IMR-90 (cell line): ENCODE measurements at regions of chr20 and their contacts with region 1.

Region 1: GRCh38 chr20:52913650-52914387 is 58.3 kb upstream of the TSHZ2 start:
- DNase-seq: no peak
- ATAC-seq: no peak
- H3K4me3 ChIP-seq: no peak overlapping the region
- H3K27ac ChIP-seq: no peak overlapping the region
- H3K4me1 ChIP-seq: no peaks in the 10 kb centered on the region
- H3K27me3 ChIP-seq: no peaks in the 10 kb centered on the region
- CTCF ChIP-seq: no peak
- POLR2A ChIP-seq: no peak
- RAD21 ChIP-seq: no peak

Region 2: DNA sequence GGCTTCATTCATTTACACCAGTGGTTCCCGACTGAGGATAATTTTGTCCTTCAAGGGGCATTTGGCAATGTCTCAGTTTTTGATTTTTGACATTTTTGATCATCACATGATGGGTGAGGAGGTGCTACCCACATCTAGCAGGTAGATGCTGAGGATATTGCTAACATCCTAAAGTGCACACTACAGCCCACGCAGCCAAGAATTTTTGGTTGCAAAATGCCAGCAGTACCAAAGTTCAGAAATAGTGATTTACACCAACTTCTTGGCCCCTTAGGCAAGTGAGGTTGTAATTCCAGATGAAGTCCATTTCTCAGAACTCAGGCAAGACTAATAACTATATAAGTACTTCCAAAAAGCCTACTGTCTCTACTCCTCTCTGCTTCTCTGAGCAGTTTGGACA is 21.8 kb before region 1 on chr20:
- CTCF ChIA-PET with region 1: no interaction called
- POLR2A ChIA-PET with region 1: no interaction called
- dilution Hi-C with region 1: no loop called
- in situ Hi-C with region 1: no loop called
- intact Hi-C with region 1: loop called (anchors 1 kb)
- DNase-seq: no peak
- ATAC-seq: no peak
- H3K4me3 ChIP-seq: no peak overlapping the region
- H3K27ac ChIP-seq: no peak overlapping the region
- H3K4me1 ChIP-seq: no peaks in the 10 kb centered on the region
- H3K27me3 ChIP-seq: no peaks in the 10 kb centered on the region
- CTCF ChIP-seq: no peak
- POLR2A ChIP-seq: no peak
- RAD21 ChIP-seq: no peak

Region 3: GRCh38 chr20:52975029-52975732 is 61.4 kb after region 1 on chr20:
- CTCF ChIA-PET with region 1: no interaction called
- POLR2A ChIA-PET with region 1: no interaction called
- dilution Hi-C with region 1: no loop called
- in situ Hi-C with region 1: no loop called
- intact Hi-C with region 1: no loop called
- DNase-seq: no peak
- ATAC-seq: no peak
- H3K4me3 ChIP-seq: no peak overlapping the region
- H3K27ac ChIP-seq: no peak overlapping the region
- H3K4me1 ChIP-seq: no peaks in the 10 kb centered on the region
- H3K27me3 ChIP-seq: peaks cover 3% of the 10 kb centered on the region; the same call in 1 of the 2 replicates
- CTCF ChIP-seq: no peak
- POLR2A ChIP-seq: no peak
- RAD21 ChIP-seq: no peak